Naive thymus-derived CD4-positive, alpha-beta T cell (primary cell): ENCODE measurements at regions of chr6 and their contacts with region 1.

Region 1: DNA sequence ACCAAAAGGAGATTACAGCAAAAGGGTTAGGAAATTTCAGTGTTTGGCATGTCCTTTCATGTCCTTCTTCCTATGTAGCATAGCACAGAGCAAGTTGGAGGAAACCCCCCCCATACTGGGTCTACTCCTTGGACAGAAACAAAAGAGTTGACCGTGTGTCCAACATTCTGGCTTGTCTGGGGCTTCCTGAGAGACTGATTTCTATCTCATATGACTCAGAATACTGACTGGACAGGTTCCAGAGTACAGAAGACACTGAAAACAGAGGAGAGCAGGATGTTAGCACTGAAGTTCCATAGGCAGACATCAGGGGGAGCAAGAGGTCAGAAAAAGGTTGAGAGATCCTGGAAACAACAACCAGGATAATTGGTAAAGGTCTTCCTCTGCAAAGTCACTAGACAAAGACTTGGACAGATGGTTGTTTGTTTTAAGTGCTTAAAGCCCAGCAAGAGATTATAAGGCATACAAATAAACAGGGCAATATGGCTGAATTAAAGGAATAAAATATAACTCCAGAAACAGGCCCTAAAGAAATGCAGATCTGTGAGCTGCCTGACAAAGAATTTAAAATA is 48.4 kb downstream of the USP49 start:
- DNase-seq: peak; percentile 8 to 63 (median 54)
- ATAC-seq: peak; percentile 80
- H3K4me3 ChIP-seq: no peak overlapping the region
- H3K4me3 Mint-ChIP-seq: no peak overlapping the region
- H3K27ac ChIP-seq: no peak overlapping the region
- H3K27ac Mint-ChIP-seq: peak overlapping the region in 4 of 9 donors; percentile 4 to 68 (median 32)
- H3K4me1 ChIP-seq: no peaks in the 10 kb centered on the region
- H3K4me1 Mint-ChIP-seq: peaks cover 4 to 13% (median 6%) of the 10 kb centered on the region in 7 donors
- H3K27me3 ChIP-seq: no peaks in the 10 kb centered on the region
- H3K27me3 Mint-ChIP-seq: no peaks in the 10 kb centered on the region

Region 2: DNA sequence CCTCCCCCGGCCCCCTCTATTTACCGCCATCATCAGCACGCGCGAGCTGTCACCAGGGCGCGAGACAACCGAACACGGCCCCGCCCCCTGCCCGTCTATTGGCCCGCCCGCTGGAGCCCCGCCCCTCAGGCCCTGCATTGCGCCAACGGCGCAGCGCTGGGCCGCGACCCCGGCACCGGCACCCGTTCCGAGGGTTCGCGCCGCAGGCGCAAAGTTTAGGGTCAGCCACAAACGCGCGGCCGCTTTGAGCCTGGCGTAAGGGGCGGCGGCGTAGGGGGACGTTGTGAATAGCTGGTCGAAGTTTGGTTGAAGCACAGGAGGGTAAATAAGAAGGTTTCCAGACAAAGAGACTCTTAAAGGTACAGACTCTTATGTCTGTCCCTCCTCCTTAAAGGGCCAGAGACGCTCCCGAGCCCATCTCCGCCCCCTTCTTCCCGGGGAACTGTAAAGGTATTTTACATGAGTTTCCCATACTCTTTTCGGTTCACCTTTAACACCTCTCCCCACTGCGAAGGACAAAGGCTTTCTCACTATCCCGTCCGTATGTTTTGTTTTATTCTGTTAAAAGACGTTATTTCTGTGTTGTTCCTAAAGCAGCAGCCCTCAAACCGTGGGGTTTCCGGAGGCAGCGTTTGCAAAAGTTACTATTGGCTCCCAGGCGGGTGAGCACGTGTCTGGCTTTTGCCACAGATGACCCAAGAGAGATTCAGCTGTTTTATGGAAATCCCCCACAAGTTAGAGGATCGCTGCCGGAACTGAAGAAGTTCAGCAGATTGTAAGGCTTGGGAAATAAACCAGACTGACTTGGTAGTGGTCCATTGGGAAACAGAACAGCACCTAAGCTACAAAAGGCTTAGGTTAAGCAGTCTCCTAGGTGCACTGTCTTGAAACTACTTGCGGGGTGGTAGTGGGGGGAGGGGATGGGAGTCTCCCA is 48.8 kb after region 1 on chr6 and contains the start of gene USP49:
- CTCF ChIA-PET with region 1: no interaction called
- POLR2A ChIA-PET with region 1: no interaction called
- intact Hi-C with region 1: loop called (anchors 2 to 5 kb)
- DNase-seq: peak; percentile 83 to 92 (median 90)
- ATAC-seq: peak; percentile 97
- H3K4me3 ChIP-seq: peak within 1 kb of the TSS; percentile 69
- H3K4me3 Mint-ChIP-seq: peak within 1 kb of the TSS in 1 of 10 donors; percentile 94
- H3K27ac ChIP-seq: peak within 1 kb of the TSS; percentile 76
- H3K27ac Mint-ChIP-seq: peak within 1 kb of the TSS in 7 of 9 donors; percentile 78 to 97 (median 93)
- H3K4me1 ChIP-seq: peaks cover 14 to 26% of the 10 kb centered on the region in 2 donors
- H3K4me1 Mint-ChIP-seq: peaks cover 5 to 17% (median 11%) of the 10 kb centered on the region in 7 donors
- H3K27me3 ChIP-seq: no peaks in the 10 kb centered on the region
- H3K27me3 Mint-ChIP-seq: peaks cover 0 to 7% (median 0%) of the 10 kb centered on the region in 5 donors
- total RNA-seq, gene USP49: 1.8 to 6.0 (median 3.1) TPM

Region 3: DNA sequence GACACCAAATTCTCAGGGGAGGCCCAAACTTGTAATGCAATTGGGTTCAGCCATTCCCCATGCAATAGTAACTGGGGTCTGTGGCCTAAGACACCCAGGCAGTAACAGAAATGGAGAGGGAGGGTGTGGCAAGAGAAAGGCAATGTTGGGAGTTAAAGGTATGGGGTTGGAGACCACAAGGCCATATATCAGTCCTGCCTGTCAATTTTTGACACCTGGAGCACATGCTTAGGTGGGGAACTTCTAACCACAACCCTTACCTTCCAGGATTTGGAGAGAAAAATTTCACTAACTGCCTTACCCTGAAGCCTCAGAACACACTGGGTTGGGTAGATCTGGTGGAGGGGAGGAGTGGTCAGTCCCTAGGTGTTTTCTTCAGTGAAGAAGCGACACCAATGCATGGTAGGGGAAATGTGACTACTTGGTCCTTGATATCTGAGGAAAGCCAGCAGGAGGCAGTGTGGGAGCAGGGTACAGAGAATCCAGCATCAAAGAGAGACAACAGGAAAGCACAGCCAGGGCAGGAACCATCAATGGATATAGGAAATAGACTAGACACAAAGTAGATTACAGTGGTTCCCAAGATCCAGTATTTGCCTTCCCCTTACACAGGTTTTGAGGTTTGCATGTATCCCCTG is 55.2 kb after region 1 on chr6:
- CTCF ChIA-PET with region 1: interaction called, 3 read pairs
- POLR2A ChIA-PET with region 1: no interaction called
- intact Hi-C with region 1: loop called (anchors 2 to 5 kb)
- DNase-seq: peak in 8 of 9 donors; percentile 42 to 66 (median 52)
- ATAC-seq: peak; percentile 78
- H3K4me3 ChIP-seq: no peak overlapping the region
- H3K4me3 Mint-ChIP-seq: no peak overlapping the region
- H3K27ac ChIP-seq: no peak overlapping the region
- H3K27ac Mint-ChIP-seq: peak overlapping the region in 7 of 9 donors; percentile 5 to 61 (median 14)
- H3K4me1 ChIP-seq: peaks cover 0 to 7% of the 10 kb centered on the region in 2 donors
- H3K4me1 Mint-ChIP-seq: peaks cover 8 to 27% (median 23%) of the 10 kb centered on the region in 7 donors
- H3K27me3 ChIP-seq: no peaks in the 10 kb centered on the region
- H3K27me3 Mint-ChIP-seq: no peaks in the 10 kb centered on the region

Region 4: DNA sequence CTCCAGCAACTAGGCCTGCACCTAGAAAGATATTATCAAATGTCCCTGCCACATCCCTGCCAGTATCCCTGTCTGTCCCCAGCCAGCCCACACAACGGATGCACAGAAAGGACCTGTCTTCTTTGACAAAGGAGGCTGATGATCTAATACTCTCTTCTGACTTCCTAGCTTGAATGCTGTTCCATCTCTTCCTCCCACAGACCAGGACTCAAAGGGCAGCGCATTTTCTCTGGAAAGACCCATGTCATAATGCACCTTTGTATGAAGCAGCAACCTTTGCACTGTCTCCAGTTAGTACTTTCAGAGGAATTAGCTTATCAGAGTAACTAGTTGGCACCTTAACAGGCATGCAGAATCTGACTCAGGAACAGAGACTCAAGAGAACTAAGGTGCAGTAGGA is 150.2 kb after region 1 on chr6:
- CTCF ChIA-PET with region 1: no interaction called
- POLR2A ChIA-PET with region 1: no interaction called
- intact Hi-C with region 1: no loop called
- DNase-seq: no peak
- ATAC-seq: no peak
- H3K4me3 ChIP-seq: no peak overlapping the region
- H3K4me3 Mint-ChIP-seq: peak overlapping the region in 4 of 10 donors; percentile 18 to 60 (median 44)
- H3K27ac ChIP-seq: peak overlapping the region; percentile 39
- H3K27ac Mint-ChIP-seq: peak overlapping the region; percentile 11 to 88 (median 69)
- H3K4me1 ChIP-seq: peaks cover 0 to 12% of the 10 kb centered on the region in 2 donors
- H3K4me1 Mint-ChIP-seq: peaks cover 21 to 64% (median 46%) of the 10 kb centered on the region in 7 donors
- H3K27me3 ChIP-seq: no peaks in the 10 kb centered on the region
- H3K27me3 Mint-ChIP-seq: no peaks in the 10 kb centered on the region

Region 5: DNA sequence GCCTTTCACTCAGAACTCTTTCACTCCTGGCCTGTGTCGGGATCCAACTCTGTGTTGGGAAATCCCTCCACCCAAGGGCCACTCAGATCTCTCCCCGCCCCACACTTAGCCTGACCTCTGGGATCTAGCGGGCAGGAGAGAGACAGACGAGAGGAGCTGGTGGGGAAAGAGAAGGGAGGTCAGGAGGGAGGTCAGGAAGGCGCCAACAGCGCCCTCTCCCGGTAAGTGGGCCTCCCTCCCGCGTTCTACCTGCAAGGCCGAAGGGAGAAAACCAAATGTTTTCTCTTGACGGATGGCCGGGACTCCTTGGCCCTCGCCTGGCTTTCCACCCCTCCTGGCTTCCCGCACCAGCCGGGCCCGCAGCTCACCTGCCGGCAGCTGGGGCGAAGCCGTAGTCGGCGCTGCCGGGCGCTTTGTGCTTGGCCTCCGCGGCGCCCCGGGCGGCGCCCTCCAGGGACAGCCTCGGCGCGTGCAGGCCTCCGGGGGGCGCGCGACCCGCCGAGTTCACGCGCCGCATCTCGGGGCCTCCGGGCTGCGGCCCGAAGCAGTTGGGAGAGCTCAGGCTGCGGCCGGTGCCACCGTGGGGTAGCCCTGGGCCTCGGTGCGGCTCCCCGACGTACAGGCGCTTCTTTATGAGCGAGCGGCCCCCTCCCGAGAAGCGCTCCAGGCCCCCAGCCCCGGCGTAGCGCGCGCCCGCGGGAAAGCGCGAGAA is 257.5 kb after region 1 on chr6:
- CTCF ChIA-PET with region 1: interaction called, 3 read pairs
- POLR2A ChIA-PET with region 1: no interaction called
- intact Hi-C with region 1: loop called in 1 of 2 experiments (anchors 1 kb)
- DNase-seq: peak; percentile 39 to 79 (median 73)
- ATAC-seq: peak; percentile 90
- H3K4me3 ChIP-seq: peak overlapping the region; percentile 68
- H3K4me3 Mint-ChIP-seq: peak overlapping the region; percentile 66 to 89 (median 70)
- H3K27ac ChIP-seq: peak overlapping the region; percentile 41
- H3K27ac Mint-ChIP-seq: peak overlapping the region in 5 of 9 donors; percentile 20 to 78 (median 58)
- H3K4me1 ChIP-seq: peaks cover 0 to 4% of the 10 kb centered on the region in 2 donors
- H3K4me1 Mint-ChIP-seq: peaks cover 0 to 28% (median 9%) of the 10 kb centered on the region in 7 donors
- H3K27me3 ChIP-seq: no peaks in the 10 kb centered on the region
- H3K27me3 Mint-ChIP-seq: no peaks in the 10 kb centered on the region

Region 6: GRCh38 chr6:42166444-42167141 is 319.8 kb after region 1 on chr6:
- CTCF ChIA-PET with region 1: interaction called, 5 read pairs
- POLR2A ChIA-PET with region 1: no interaction called
- intact Hi-C with region 1: loop called (anchors 1 kb)
- DNase-seq: peak; percentile 48 to 83 (median 71)
- ATAC-seq: peak; percentile 95
- H3K4me3 ChIP-seq: no peak overlapping the region
- H3K4me3 Mint-ChIP-seq: no peak overlapping the region
- H3K27ac ChIP-seq: no peak overlapping the region
- H3K27ac Mint-ChIP-seq: peak overlapping the region in 2 of 9 donors; percentile 10 to 51
- H3K4me1 ChIP-seq: no peaks in the 10 kb centered on the region
- H3K4me1 Mint-ChIP-seq: peaks cover 0 to 10% (median 5%) of the 10 kb centered on the region in 7 donors
- H3K27me3 ChIP-seq: no peaks in the 10 kb centered on the region
- H3K27me3 Mint-ChIP-seq: peaks cover 0 to 6% (median 3%) of the 10 kb centered on the region in 5 donors

Region 7: GRCh38 chr6:42217519-42218367 is 371.0 kb after region 1 on chr6 and contains the start of gene MRPS10:
- CTCF ChIA-PET with region 1: no interaction called
- POLR2A ChIA-PET with region 1: no interaction called
- intact Hi-C with region 1: loop called in 1 of 2 experiments (anchors 2 kb)
- DNase-seq: peak; percentile 72 to 92 (median 87)
- ATAC-seq: peak; percentile 100
- H3K4me3 ChIP-seq: peak within 1 kb of the TSS; percentile 96
- H3K4me3 Mint-ChIP-seq: peak within 1 kb of the TSS; percentile 92 to 100 (median 98)
- H3K27ac ChIP-seq: peak within 1 kb of the TSS; percentile 77
- H3K27ac Mint-ChIP-seq: peak within 1 kb of the TSS; percentile 87 to 99 (median 97)
- H3K4me1 ChIP-seq: peaks cover 9 to 14% of the 10 kb centered on the region in 2 donors
- H3K4me1 Mint-ChIP-seq: peaks cover 7 to 34% (median 24%) of the 10 kb centered on the region in 7 donors
- H3K27me3 ChIP-seq: no peaks in the 10 kb centered on the region
- H3K27me3 Mint-ChIP-seq: no peaks in the 10 kb centered on the region
- total RNA-seq, gene MRPS10: 17.0 to 30.3 (median 25.3) TPM

Region 8: DNA sequence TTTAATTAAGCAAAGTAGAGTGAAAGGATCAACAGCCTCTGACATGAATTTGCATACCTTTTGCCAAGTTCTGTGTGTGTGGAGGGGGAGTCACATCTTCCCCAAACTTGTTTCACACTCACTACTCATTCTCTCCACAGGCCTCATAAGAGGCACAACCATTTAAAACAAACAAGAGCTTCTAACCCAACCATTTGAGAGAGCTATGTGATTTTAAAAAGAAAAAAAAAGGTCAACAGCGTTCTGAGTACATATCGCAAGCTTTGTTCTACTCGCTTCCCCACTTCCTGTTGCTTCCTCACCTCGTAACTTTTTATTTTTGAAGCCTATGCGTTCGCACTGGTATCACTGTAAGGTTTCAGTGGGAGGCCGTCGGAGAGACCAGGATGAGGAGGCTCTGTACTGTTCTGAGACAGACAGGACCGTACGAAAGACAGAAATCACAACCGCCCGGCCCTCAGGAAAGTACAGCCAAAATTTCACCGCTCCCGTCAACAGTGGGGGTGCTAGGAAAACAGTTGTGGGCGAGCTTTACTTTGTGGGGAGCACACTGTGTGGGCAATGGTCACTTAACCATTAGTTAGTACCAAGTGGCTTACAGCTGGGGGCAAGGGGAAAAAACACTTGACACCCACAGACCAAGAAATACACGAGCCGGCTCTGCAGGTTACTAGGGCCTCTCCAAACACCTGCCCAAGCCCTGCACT is 543.6 kb after region 1 on chr6:
- CTCF ChIA-PET with region 1: no interaction called
- POLR2A ChIA-PET with region 1: no interaction called
- intact Hi-C with region 1: no loop called
- DNase-seq: peak in 8 of 9 donors; percentile 69 to 90 (median 82)
- ATAC-seq: peak; percentile 88
- H3K4me3 ChIP-seq: peak overlapping the region; percentile 50
- H3K4me3 Mint-ChIP-seq: peak overlapping the region; percentile 71 to 87 (median 84)
- H3K27ac ChIP-seq: peak overlapping the region; percentile 85
- H3K27ac Mint-ChIP-seq: peak overlapping the region; percentile 97 to 100 (median 99)
- H3K4me1 ChIP-seq: peaks cover 89% of the 10 kb centered on the region in 2 donors
- H3K4me1 Mint-ChIP-seq: peaks cover 75 to 100% (median 96%) of the 10 kb centered on the region in 7 donors
- H3K27me3 ChIP-seq: no peaks in the 10 kb centered on the region
- H3K27me3 Mint-ChIP-seq: no peaks in the 10 kb centered on the region

Region 9: DNA sequence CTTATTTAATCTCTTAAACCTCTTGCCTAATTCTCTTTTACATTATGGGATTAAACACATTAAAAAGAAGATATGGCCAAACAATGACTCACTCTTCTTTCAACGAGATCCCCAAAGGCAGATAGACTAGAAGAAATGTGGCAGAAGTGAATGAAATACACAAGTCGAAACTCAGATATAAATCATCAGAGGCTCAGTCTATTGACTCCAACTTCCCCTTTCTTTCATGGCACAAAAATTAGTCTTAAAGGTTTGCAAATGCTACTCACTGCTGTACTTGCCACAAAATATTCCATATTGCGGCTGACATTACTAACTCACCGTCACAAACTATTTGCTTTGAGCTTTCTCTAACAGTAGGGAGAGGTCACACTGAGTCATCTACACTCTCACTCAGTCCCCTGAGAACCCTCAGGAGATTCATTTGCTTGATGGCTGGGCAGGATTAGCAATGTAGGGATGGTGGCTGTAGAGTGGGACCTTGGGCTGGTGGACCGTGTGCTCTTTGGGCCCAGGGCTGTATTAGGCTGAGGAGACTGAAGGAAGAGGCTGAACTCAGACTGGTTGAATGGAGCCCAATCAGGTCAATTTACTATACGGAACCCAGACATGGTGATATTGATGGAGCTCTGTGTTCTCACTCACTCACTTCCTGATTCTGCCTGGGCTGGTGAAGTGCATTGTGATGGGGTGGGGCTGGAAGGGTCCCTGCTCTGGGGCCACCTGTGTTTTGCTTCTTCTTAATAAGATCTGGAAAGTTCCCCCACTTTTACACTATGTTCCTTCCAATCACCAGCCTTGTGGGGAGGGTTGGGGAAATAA is 674.2 kb after region 1 on chr6:
- CTCF ChIA-PET with region 1: no interaction called
- POLR2A ChIA-PET with region 1: no interaction called
- intact Hi-C with region 1: no loop called
- DNase-seq: peak in 1 of 9 donors; percentile 28
- ATAC-seq: peak; percentile 69
- H3K4me3 ChIP-seq: no peak overlapping the region
- H3K4me3 Mint-ChIP-seq: no peak overlapping the region
- H3K27ac ChIP-seq: no peak overlapping the region
- H3K27ac Mint-ChIP-seq: no peak overlapping the region
- H3K4me1 ChIP-seq: no peaks in the 10 kb centered on the region
- H3K4me1 Mint-ChIP-seq: peaks cover 0 to 7% (median 0%) of the 10 kb centered on the region in 7 donors
- H3K27me3 ChIP-seq: no peaks in the 10 kb centered on the region
- H3K27me3 Mint-ChIP-seq: no peaks in the 10 kb centered on the region

Region 10: DNA sequence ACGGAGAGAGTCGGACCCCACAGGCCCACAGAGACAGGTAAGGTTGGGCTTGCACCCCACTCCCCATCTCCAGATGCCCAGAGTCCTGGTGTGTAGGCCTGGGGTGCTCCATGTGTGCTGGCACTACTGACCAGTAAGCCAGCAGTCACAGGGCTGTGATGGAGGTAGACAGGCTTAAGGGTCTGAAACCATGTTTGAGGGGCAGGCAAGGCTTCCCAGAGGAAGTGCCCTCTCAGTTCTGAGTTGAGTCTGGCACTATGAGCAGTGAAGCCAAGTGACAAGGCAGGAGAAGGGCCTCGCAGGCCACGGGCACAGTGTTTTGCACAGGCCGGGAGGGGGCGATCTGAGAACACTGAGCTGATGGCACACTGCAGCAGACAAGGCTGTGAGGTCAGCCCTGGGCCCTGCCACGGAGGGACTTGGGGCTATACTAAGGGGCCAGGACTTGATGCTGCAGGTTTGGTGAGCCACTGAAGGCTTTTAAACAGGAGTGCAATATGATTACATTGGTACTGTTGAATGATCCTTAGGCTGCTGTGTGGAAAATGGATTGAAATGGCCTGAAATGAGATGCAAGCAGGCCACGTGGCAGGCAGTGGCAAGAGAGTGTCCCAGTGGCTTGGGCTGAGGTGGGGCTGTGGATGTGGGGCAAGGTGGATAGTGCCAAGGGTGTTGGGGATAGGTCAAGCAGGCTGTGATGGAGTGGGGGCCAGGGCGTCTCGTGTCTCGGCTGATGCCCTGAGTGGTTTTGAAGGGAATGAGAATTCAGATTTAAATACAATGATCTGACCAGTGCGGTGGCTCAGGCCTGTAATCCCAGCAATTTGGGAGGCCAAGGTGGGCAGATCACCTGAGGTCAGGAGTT is 1416.8 kb after region 1 on chr6:
- CTCF ChIA-PET with region 1: no interaction called
- POLR2A ChIA-PET with region 1: no interaction called
- intact Hi-C with region 1: no loop called
- DNase-seq: peak; percentile 49 to 74 (median 66)
- ATAC-seq: peak; percentile 93
- H3K4me3 ChIP-seq: no peak overlapping the region
- H3K4me3 Mint-ChIP-seq: peak overlapping the region in 1 of 10 donors; percentile 53
- H3K27ac ChIP-seq: no peak overlapping the region
- H3K27ac Mint-ChIP-seq: peak overlapping the region in 2 of 9 donors; percentile 4 to 43
- H3K4me1 ChIP-seq: no peaks in the 10 kb centered on the region
- H3K4me1 Mint-ChIP-seq: peaks cover 0 to 17% (median 0%) of the 10 kb centered on the region in 7 donors
- H3K27me3 ChIP-seq: no peaks in the 10 kb centered on the region
- H3K27me3 Mint-ChIP-seq: peaks cover 0 to 17% (median 0%) of the 10 kb centered on the region in 5 donors